Heart right ventricle (tissue), 16 donors: ENCODE measurements at regions of chr7 and their contacts with region 1.

Region 1: GRCh38 chr7:24653316-24654085 is 80.2 kb downstream of the PALS2 start:
- DNase-seq: no peak
- ATAC-seq: no peak
- H3K4me3 ChIP-seq: peak overlapping the region in 6 of 10 donors; percentile 9 to 36 (median 34)
- H3K27ac ChIP-seq: peak overlapping the region in 1 of 10 donors; percentile 26
- H3K4me1 ChIP-seq: peaks cover 0 to 6% (median 0%) of the 10 kb centered on the region in 9 donors
- H3K27me3 ChIP-seq: no peaks in the 10 kb centered on the region
- CTCF ChIP-seq: no peak

Region 2: DNA sequence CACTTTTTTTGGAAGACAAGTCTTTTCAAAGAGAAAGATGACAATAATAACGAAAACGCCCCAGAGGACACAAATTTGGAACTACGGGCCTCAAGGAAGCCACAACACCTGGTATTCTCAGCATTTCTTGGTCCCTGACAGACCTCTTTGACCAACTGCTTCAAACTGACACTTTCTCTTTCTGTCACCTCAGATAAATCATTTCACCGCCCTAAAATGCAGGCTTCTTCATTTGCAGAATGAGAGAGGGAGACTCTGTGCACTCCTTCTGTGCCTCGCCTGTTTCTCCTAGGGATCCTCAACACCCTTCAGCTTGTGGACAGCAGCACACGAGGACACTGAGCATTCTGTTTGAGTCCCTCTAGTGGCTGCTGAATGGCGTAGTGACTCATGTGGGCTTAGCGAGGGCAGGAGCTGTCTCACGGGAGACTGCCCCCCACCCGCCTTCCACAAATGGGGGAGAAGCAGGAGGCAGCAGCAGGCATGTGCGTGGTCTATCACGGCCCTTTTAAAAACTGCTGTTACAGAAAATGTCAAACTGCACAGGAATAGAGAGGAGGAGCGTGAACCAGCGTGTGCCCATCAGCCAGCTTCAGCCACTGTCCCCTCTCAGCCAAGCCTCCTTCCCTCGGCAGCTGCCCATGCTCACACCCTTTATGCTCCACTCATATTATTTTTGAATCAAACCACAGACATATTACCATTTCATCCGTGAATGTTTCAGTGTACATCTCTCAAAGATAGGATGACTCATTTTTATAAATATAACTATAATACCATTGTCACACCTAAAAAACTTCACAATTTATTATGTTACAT is 62.4 kb after region 1 on chr7:
- intact Hi-C with region 1: loop called in 1 of 10 experiments (anchors 10 kb)
- DNase-seq: no peak
- ATAC-seq: peak in 6 of 8 donors; percentile 56 to 77 (median 69)
- H3K4me3 ChIP-seq: no peak overlapping the region
- H3K27ac ChIP-seq: no peak overlapping the region
- H3K4me1 ChIP-seq: no peaks in the 10 kb centered on the region
- H3K27me3 ChIP-seq: no peaks in the 10 kb centered on the region
- CTCF ChIP-seq: peak in 8 of 9 donors; percentile 13 to 54 (median 42)